Naive thymus-derived CD4-positive, alpha-beta T cell (primary cell): ENCODE measurements at regions of chr3 and their contacts with region 1.

Region 1: GRCh38 chr3:11969986-11970385 is 34.2 kb upstream of the SYN2 start:
- DNase-seq: no peak
- ATAC-seq: no peak
- H3K4me3 ChIP-seq: no peak overlapping the region
- H3K4me3 Mint-ChIP-seq: no peak overlapping the region
- H3K27ac ChIP-seq: no peak overlapping the region
- H3K27ac Mint-ChIP-seq: no peak overlapping the region
- H3K4me1 ChIP-seq: no peaks in the 10 kb centered on the region
- H3K4me1 Mint-ChIP-seq: no peaks in the 10 kb centered on the region
- H3K27me3 ChIP-seq: no peaks in the 10 kb centered on the region
- H3K27me3 Mint-ChIP-seq: peaks cover 4 to 27% (median 20%) of the 10 kb centered on the region in 5 donors

Region 2: GRCh38 chr3:11991751-11992150 is 21.8 kb after region 1 on chr3:
- CTCF ChIA-PET with region 1: no interaction called
- POLR2A ChIA-PET with region 1: no interaction called
- intact Hi-C with region 1: loop called in 1 of 2 experiments (anchors 1 kb)
- DNase-seq: no peak
- ATAC-seq: no peak
- H3K4me3 ChIP-seq: no peak overlapping the region
- H3K4me3 Mint-ChIP-seq: no peak overlapping the region
- H3K27ac ChIP-seq: no peak overlapping the region
- H3K27ac Mint-ChIP-seq: no peak overlapping the region
- H3K4me1 ChIP-seq: no peaks in the 10 kb centered on the region
- H3K4me1 Mint-ChIP-seq: no peaks in the 10 kb centered on the region
- H3K27me3 ChIP-seq: no peaks in the 10 kb centered on the region
- H3K27me3 Mint-ChIP-seq: peaks cover 0 to 29% (median 20%) of the 10 kb centered on the region in 5 donors

Region 3: GRCh38 chr3:12613250-12613649 is 643.3 kb after region 1 on chr3:
- CTCF ChIA-PET with region 1: no interaction called
- POLR2A ChIA-PET with region 1: no interaction called
- intact Hi-C with region 1: no loop called
- DNase-seq: peak in 3 of 9 donors; percentile 9 to 18 (median 14)
- ATAC-seq: no peak
- H3K4me3 ChIP-seq: no peak overlapping the region
- H3K4me3 Mint-ChIP-seq: peak overlapping the region in 3 of 10 donors; percentile 37 to 45 (median 44)
- H3K27ac ChIP-seq: peak overlapping the region; percentile 17
- H3K27ac Mint-ChIP-seq: peak overlapping the region in 8 of 9 donors; percentile 27 to 86 (median 76)
- H3K4me1 ChIP-seq: peaks cover 3 to 5% of the 10 kb centered on the region in 2 donors
- H3K4me1 Mint-ChIP-seq: peaks cover 17 to 65% (median 51%) of the 10 kb centered on the region in 7 donors
- H3K27me3 ChIP-seq: no peaks in the 10 kb centered on the region
- H3K27me3 Mint-ChIP-seq: no peaks in the 10 kb centered on the region